ENCODE measurements at regions of chr2 and their contacts with region 1.

Region 1: GRCh38 chr2:229800997-229801754 is 86.8 kb upstream of the DNER start:
- DNase-seq: peak; percentile 59
- H3K27ac ChIP-seq: no peak overlapping the region
- CTCF ChIP-seq: peak; percentile 84

Region 2: GRCh38 chr2:229463525-229464346 is 337.4 kb before region 1 on chr2:
- CTCF ChIA-PET with region 1: no interaction called
- POLR2A ChIA-PET with region 1: no interaction called
- DNase-seq: no peak
- H3K27ac ChIP-seq: no peak overlapping the region
- CTCF ChIP-seq: no peak

Region 3: GRCh38 chr2:229780856-229781773 is 20.1 kb before region 1 on chr2:
- CTCF ChIA-PET with region 1: interaction called, 19 read pairs
- POLR2A ChIA-PET with region 1: no interaction called
- DNase-seq: peak; percentile 54
- H3K27ac ChIP-seq: no peak overlapping the region
- CTCF ChIP-seq: peak; percentile 92

Region 4: GRCh38 chr2:229821316-229821715 is 20.1 kb after region 1 on chr2:
- CTCF ChIA-PET with region 1: no interaction called
- POLR2A ChIA-PET with region 1: no interaction called
- DNase-seq: no peak
- H3K27ac ChIP-seq: no peak overlapping the region
- CTCF ChIP-seq: no peak

Measured in RWPE1 (cell line).